Gastrocnemius medialis (tissue), 4 donors: ENCODE measurements at regions of chrX and their contacts with region 1.

Region 1: DNA sequence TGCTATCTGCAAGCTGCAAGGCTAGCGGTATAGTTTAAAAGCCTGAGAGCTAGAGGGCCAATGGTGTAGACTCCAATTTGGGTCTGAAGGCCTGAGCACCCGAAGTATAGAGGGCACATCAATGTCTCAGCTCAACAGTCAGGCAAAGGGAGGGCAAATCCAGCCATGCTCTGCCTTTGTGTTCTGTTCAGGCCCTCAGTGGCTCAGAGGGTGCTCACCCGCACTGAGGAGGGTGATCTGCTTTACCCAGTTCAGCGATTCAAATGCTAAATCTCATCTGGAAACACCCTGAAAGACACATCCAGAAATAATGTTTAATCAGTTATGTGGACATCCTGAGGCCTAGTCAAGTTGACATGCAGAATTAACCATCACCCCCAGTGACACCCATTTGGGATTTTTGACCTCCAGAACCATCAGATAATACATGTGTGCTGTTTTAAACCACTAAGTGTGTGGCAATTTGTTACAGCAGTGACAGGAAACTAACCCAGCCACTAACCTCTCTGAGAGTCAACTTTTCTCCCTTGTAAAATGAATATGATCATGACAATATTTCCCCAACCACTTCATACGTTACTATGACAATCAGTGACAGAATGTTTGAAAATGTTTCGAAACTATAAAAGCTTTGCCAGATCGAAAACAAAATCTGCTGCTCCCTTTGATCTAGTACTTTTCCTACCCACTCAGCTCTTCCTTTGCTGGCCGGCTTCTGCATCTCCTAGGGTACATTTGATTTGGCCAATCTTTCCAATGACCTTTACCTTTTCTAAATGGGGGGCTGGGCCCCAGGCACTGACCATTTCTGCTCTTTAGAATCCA is 8.4 kb upstream of the TBL1X start:
- DNase-seq: no peak
- ATAC-seq: no peak
- H3K4me3 ChIP-seq: no peak overlapping the region
- H3K27ac ChIP-seq: no peak overlapping the region
- H3K4me1 ChIP-seq: no peaks in the 10 kb centered on the region
- H3K27me3 ChIP-seq: no peaks in the 10 kb centered on the region
- CTCF ChIP-seq: no peak
- POLR2A ChIP-seq: no peak

Region 2: DNA sequence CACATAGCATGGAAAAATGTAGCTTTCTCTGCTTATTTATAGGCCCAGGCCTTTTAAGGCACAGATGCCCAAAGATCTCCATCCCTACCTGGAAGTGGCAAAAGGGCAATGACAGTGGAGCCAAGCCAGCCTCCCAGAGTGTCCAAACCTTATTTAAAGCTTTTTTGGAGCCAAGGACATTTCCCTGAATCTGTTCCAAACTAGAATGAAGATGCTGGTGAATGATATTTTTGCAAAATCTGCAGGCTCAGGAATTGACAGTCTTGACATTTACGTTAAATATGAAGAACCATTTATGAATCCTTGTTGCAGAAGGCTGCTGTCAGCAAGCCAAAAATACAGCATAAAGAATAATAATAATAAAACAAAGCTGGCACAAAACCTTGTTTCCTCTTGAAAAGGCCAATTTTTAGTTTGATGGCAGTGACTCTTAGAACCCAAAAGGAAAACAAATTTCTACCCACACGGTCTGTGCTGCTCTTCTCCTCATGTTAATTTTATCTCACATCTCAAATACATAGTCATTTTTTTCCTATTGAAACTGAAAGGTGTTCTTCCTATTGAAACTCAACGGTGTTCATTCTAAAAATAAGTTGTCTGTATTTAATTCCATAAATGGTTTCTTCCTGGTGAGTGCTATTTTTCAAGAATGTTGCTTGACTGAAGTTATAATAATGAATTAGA is 197.9 kb before region 1 on chrX:
- in situ Hi-C with region 1: no loop called
- intact Hi-C with region 1: no loop called
- DNase-seq: no peak
- ATAC-seq: no peak
- H3K4me3 ChIP-seq: no peak overlapping the region
- H3K27ac ChIP-seq: no peak overlapping the region
- H3K4me1 ChIP-seq: no peaks in the 10 kb centered on the region
- H3K27me3 ChIP-seq: peaks cover 0 to 6% (median 0%) of the 10 kb centered on the region in 3 donors
- CTCF ChIP-seq: no peak
- POLR2A ChIP-seq: no peak

Region 3: DNA sequence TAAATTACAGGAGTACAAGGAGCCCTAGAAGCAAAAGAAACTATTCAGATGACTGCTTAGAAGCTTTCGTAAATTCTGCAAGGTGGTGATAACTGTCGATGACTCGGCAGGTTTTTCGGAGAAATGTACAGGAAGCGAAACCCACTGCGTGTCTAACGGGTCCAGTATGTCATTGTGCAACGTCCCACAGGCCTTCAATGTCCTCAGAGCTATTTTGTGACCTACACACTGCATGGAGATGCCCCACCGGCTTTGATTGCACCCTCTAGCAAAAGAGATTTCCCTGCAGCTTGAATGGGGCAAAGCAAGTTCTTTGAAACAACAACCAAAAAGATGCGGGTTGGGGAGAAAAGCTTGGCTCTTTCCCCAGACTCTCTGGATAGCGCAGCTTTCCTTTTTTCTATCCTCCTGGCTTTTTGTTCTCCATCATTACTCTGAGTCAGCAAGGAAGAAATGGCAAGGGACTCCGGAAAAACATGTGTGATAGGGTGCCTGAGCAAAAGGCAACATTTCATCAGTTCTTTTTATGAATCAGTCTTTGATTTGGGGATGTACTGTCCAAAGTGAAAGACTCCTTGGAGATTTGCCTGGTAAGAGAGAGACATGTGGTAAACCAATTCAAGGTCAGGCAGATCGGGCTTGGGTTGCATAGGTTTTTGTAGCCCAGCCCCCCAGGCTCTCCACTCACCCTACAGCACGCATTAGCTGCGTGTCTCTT is 103.6 kb before region 1 on chrX:
- in situ Hi-C with region 1: loop called (anchors 5 to 10 kb)
- intact Hi-C with region 1: no loop called
- DNase-seq: peak; percentile 4 to 20
- ATAC-seq: peak in 1 of 2 donors; percentile 46
- H3K4me3 ChIP-seq: no peak overlapping the region
- H3K27ac ChIP-seq: no peak overlapping the region
- H3K4me1 ChIP-seq: peaks cover 0 to 6% of the 10 kb centered on the region in 2 donors
- H3K27me3 ChIP-seq: no peaks in the 10 kb centered on the region
- CTCF ChIP-seq: no peak
- POLR2A ChIP-seq: no peak